Mammary epithelial cell (primary cell): ENCODE measurements at regions of chr1 and their contacts with region 1.

Region 1: DNA sequence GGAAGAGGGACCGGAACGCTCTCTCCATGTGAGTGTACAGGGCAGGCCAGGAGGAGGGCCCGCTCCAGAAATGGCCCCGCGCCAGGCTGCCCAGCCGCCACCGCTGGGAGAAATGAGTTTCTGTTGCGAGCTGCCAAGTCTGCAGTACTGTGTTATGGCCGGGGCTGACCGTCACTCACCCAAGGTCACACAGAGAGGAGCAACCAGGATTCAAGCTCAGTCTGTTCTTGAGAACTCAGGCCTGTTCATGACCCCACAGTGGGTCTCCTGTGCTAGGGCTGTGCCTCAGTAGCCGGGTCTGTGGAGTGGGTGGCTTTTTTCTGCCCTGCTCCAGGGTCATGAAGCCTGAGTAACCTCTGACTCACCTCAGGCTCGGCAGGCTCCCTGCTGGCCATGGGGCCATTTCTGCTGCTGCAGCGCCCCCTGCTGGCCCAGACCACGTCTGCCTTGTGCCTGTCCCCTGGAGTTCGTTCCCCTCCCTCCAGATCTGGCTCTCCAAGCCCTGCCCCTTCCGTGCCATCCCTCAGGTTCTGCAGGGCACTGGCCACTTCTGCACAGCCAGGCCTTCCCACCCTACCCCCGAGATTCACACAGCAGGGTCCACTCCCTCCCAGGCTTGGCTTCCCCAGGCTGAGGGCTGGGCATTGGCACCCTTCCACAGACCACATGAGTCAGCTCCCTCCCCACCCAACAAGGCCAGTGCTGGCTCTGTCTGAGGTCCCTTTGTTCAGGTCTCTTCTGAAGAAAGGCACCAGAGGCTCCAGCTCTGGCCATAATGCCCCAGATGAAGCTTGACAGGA is 51.8 kb downstream of the EDN2 start:
- DNase-seq: peak; percentile 93
- H3K4me3 ChIP-seq: peak overlapping the region in 1 of 3 experiments; percentile 18
- H3K27ac ChIP-seq: peak overlapping the region; percentile 37
- H3K4me1 ChIP-seq: peaks cover 21% of the 10 kb centered on the region
- H3K27me3 ChIP-seq: no peaks in the 10 kb centered on the region
- CTCF ChIP-seq: peak; percentile 93 to 95

Region 2: GRCh38 chr1:41003640-41004220 is 429.0 kb before region 1 on chr1:
- CTCF ChIA-PET with region 1: no interaction called
- dilution Hi-C with region 1: no loop called
- in situ Hi-C with region 1: no loop called
- intact Hi-C with region 1: loop called (anchors 10 kb)
- DNase-seq: peak; percentile 97
- H3K4me3 ChIP-seq: no peak overlapping the region
- H3K27ac ChIP-seq: peak overlapping the region; percentile 38
- H3K4me1 ChIP-seq: peaks cover 49% of the 10 kb centered on the region
- H3K27me3 ChIP-seq: no peaks in the 10 kb centered on the region
- CTCF ChIP-seq: peak; percentile 57 to 74

Region 3: GRCh38 chr1:41268154-41268770 is 164.4 kb before region 1 on chr1:
- CTCF ChIA-PET with region 1: no interaction called
- dilution Hi-C with region 1: no loop called
- in situ Hi-C with region 1: loop called in 1 of 2 experiments (anchors 5 kb)
- intact Hi-C with region 1: loop called (anchors 1 kb)
- DNase-seq: peak; percentile 50
- H3K4me3 ChIP-seq: no peak overlapping the region
- H3K27ac ChIP-seq: no peak overlapping the region
- H3K4me1 ChIP-seq: no peaks in the 10 kb centered on the region
- H3K27me3 ChIP-seq: no peaks in the 10 kb centered on the region
- CTCF ChIP-seq: peak; percentile 94 to 98

Region 4: DNA sequence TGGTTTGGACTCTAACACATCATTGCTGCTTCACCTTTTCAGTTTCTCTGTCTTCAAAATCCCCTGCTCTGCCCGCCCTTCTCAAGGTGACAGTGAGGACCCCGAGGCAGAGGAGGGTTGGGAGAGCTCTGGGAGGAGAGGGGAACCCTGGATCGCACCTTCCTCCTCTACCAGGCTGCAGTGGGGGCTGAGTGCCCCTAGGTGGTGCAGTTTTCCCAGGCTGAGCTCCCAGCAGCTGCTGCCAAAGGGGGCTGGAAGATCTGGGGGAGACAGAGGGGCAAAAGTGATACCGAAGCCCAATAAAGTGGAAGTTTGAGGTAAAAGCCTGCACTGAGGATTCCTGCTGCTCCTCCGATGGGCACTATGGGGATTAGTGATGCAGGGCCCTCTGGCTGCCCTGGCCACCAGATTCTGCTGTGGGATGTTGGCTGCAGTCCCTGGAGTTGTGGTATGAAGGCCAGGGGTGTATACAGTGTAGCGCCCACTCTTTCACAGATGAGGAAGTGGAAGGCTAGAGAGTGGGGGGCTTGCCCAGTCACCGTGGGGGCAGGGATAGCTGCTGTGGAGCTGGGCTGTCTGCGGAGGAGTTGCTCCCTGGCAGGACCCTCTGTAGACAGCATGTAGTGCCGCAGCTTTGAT is 149.9 kb before region 1 on chr1:
- CTCF ChIA-PET with region 1: interaction called, 3 read pairs
- dilution Hi-C with region 1: no loop called
- in situ Hi-C with region 1: no loop called
- intact Hi-C with region 1: loop called (anchors 1 kb)
- DNase-seq: peak; percentile 9
- H3K4me3 ChIP-seq: no peak overlapping the region
- H3K27ac ChIP-seq: no peak overlapping the region
- H3K4me1 ChIP-seq: no peaks in the 10 kb centered on the region
- H3K27me3 ChIP-seq: no peaks in the 10 kb centered on the region
- CTCF ChIP-seq: peak; percentile 76 to 96

Region 5: DNA sequence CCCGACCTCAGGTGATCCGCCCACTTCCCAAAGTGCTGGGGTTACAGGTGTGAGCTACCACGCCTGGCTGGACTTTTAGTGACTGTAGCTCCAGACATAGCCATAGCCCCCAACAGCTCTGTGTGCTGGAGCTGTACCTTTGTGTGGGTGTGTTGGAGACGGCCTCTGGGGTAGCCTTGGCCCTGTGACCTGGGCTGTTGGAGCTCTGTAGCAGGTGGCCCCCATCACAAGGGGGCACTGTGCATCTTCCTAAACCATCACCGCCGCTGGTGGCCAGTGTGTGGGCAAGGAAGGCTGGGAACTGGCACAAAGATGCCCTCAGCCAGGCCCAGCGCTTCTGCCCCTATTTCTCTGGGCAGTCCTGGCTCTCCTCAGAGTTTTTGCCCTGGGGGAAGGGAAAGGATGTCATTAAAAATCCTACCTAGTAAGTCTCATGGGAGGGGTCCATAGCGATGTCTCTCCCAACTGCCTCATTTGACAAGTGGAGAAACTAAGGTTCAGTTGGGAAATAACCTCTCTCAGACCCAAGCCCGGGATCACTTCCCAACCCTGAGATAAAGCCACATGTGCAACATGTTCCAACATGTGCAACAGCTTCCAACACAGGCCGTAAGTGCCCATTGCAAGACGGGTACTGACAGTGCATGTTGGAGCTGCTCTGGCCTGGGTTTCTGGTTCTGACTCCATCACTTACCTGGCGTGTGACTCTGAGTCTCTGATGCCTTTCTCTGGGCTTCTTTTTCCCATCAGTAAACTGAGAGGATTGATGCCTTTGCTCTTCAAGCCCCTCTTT is 109.7 kb before region 1 on chr1:
- CTCF ChIA-PET with region 1: no interaction called
- dilution Hi-C with region 1: no loop called
- in situ Hi-C with region 1: no loop called
- intact Hi-C with region 1: loop called (anchors 1 kb)
- DNase-seq: peak; percentile 68
- H3K4me3 ChIP-seq: no peak overlapping the region
- H3K27ac ChIP-seq: no peak overlapping the region
- H3K4me1 ChIP-seq: peaks cover 11% of the 10 kb centered on the region
- H3K27me3 ChIP-seq: no peaks in the 10 kb centered on the region
- CTCF ChIP-seq: peak; percentile 49 to 67

Region 6: GRCh38 chr1:41360993-41361753 is 71.5 kb before region 1 on chr1 and contains the start of gene FOXO6:
- CTCF ChIA-PET with region 1: interaction called, 17 read pairs
- dilution Hi-C with region 1: no loop called
- in situ Hi-C with region 1: no loop called
- intact Hi-C with region 1: loop called (anchors 1 kb)
- DNase-seq: peak; percentile 95
- H3K4me3 ChIP-seq: peak within 1 kb of the TSS in 2 of 3 experiments; percentile 46 to 54
- H3K27ac ChIP-seq: peak within 1 kb of the TSS; percentile 45
- H3K4me1 ChIP-seq: peaks cover 42% of the 10 kb centered on the region
- H3K27me3 ChIP-seq: peaks cover 12% of the 10 kb centered on the region
- CTCF ChIP-seq: peak in 1 of 2 donors; percentile 22
- total RNA-seq, gene FOXO6: 0.28 to 0.67 TPM

Region 7: GRCh38 chr1:41516168-41517061 is 83.7 kb after region 1 on chr1:
- CTCF ChIA-PET with region 1: interaction called, 4 read pairs
- dilution Hi-C with region 1: no loop called
- in situ Hi-C with region 1: no loop called
- intact Hi-C with region 1: loop called (anchors 1 kb)
- DNase-seq: peak; percentile 71
- H3K4me3 ChIP-seq: peak overlapping the region in 2 of 3 experiments; percentile 18 to 38
- H3K27ac ChIP-seq: no peak overlapping the region
- H3K4me1 ChIP-seq: peaks cover 23% of the 10 kb centered on the region
- H3K27me3 ChIP-seq: no peaks in the 10 kb centered on the region
- CTCF ChIP-seq: peak; percentile 69 to 91